Tibial artery (tissue), 4 donors: ENCODE measurements at regions of chr2 and their contacts with region 1.

Region 1: DNA sequence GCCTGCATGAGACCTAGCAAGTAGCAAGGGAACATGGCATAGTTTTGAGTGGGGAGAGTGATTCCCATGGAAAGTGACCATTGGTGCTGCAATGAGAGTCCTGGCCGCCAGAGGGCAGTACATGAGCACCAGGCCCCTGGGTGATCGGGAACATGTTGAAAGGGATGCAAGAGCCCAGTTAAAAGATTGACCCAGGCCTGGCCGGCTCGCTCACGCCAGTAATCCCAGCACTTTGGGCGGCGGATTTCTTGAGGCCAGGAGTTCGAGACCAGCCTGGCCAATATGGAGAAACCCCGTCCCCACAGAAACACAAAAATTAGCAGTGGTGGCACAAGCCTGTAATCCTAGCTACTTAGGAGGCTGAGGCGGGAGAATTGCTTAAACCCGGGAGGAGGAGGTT is 22.2 kb downstream of the FAP start:
- DNase-seq: peak; percentile 74 to 87
- H3K4me3 ChIP-seq: no peak overlapping the region
- H3K27ac ChIP-seq: no peak overlapping the region
- H3K4me1 ChIP-seq: peaks cover 0 to 15% (median 0%) of the 10 kb centered on the region in 4 donors
- H3K27me3 ChIP-seq: no peaks in the 10 kb centered on the region
- CTCF ChIP-seq: peak; percentile 83

Region 2: GRCh38 chr2:162297925-162298552 is 77.0 kb after region 1 on chr2:
- intact Hi-C with region 1: loop called (anchors 2 kb)
- DNase-seq: peak in 1 of 2 donors; percentile 68
- H3K4me3 ChIP-seq: no peak overlapping the region
- H3K27ac ChIP-seq: no peak overlapping the region
- H3K4me1 ChIP-seq: peaks cover 0 to 10% (median 1%) of the 10 kb centered on the region in 4 donors
- H3K27me3 ChIP-seq: no peaks in the 10 kb centered on the region
- CTCF ChIP-seq: peak; percentile 81 to 82

Region 3: GRCh38 chr2:162636206-162636728 is 415.2 kb after region 1 on chr2:
- intact Hi-C with region 1: no loop called
- DNase-seq: no peak
- H3K4me3 ChIP-seq: no peak overlapping the region
- H3K27ac ChIP-seq: no peak overlapping the region
- H3K4me1 ChIP-seq: peaks cover 0 to 17% (median 0%) of the 10 kb centered on the region in 4 donors
- H3K27me3 ChIP-seq: no peaks in the 10 kb centered on the region
- CTCF ChIP-seq: no peak